Common myeloid progenitor, CD34-positive (primary cell): ENCODE measurements at regions of chr15 and their contacts with region 1.

Region 1: DNA sequence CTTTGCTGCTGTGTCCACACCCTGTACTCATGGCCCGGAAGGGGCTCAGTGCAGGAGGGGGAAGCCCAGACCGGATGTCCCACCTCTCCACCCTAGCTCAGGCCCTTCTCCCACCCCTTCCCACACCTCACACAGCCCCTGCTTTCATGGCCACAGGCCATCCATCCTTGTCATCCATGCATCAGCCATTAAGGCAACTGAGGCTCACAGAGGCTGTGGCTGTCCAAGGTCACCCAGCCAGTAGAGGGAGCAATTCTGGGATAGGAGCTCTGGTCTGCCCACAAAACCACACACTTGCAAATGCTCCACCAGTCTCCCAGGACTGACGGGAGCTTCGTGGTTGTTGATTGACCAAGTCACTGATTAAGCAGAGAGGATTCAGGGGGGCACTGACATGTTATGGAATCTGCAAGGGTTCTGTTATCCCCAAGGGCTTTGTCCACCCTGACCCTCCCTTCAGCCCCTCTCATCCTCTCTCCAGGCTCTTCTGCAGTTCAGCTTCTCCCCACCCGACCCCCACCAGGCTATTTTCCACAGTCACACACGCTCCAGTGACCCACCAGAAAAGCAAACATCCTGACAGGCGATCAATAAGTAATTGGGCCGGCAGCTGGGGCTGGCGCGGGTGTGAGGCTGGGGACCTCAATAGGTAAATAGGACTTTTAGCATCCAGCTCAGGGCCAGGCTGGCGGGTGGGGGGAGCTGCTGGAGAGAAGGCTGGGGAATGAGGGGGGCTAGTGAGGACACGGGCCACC is 15.1 kb downstream of the LINGO1 start:
- DNase-seq: peak in 2 of 3 donors; percentile 20 to 21
- H3K4me3 ChIP-seq: no peak overlapping the region
- H3K27ac ChIP-seq: no peak overlapping the region
- H3K4me1 ChIP-seq: no peaks in the 10 kb centered on the region
- H3K27me3 ChIP-seq: no peaks in the 10 kb centered on the region

Region 2: DNA sequence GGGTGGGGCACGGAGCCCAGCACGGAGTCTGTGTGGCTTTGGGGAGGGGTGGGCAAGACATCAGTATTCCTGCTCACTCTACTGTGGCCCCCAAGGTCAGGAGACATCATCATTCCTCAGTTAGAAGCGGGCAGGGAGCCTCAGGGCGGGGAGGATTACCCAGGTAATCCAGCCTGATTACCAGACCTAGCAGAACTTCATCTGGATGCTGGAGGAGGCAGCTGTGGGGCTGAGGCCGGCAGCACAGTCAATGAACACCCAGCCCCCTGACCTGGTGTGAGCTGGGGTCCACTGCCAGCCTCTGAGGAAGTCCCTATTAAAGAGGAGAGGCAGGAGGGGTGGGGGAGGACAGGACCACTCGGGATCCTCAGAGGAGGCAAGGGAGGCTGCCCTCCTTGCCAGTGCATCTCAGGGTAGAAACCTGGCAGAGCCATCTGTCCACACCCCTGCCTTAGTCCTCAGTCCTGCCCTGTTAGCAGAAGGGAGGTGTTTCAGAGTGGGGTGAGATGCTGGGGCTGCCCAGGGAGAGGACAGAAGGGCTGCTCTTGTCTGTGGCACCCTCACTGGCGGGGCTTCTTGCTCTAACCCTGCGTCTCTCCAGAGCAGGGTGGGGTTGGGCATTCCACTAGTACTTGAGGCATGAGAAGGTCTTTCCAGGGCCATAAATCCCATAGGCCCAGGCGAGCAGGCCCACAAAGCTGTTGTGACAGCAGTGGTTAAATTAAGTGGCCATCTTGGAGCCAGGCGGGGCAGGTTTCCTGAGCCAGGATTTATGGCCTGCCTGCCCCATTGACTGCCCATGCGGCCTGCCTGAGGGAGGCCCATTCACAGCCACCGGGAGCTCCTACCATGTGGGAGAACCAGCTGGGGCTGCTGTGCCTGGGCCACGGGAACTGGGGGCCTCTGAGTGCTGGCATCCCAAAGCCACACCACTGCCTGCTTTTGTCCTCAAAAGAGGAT is 67.1 kb before region 1 on chr15:
- CTCF ChIA-PET with region 1: no interaction called
- POLR2A ChIA-PET with region 1: no interaction called
- DNase-seq: no peak
- H3K4me3 ChIP-seq: no peak overlapping the region
- H3K27ac ChIP-seq: no peak overlapping the region
- H3K4me1 ChIP-seq: peaks cover 0 to 20% (median 10%) of the 10 kb centered on the region in 4 experiments
- H3K27me3 ChIP-seq: peaks cover 0 to 2% (median 0%) of the 10 kb centered on the region in 5 experiments

Region 3: DNA sequence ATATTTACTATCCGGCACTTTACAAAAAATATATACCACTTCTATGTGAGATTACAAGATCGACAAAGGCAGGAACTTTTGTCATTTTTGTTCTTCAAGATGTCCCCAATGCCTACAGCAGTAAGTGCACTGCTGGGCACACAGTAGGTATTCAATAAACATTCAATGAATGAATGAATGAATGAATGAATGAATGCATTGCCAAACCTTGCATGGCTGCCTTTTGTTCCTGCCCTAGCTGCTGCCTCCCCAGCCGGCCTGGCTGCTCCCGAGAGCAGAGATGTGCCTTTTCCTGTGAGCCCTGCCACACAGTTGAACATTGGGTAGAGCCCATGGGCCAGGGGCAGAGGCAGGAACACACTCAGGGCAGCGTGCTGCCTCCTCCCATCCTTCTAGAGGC is 22.4 kb before region 1 on chr15:
- CTCF ChIA-PET with region 1: no interaction called
- POLR2A ChIA-PET with region 1: no interaction called
- DNase-seq: no peak
- H3K4me3 ChIP-seq: no peak overlapping the region
- H3K27ac ChIP-seq: no peak overlapping the region
- H3K4me1 ChIP-seq: no peaks in the 10 kb centered on the region
- H3K27me3 ChIP-seq: peaks cover 0 to 3% (median 0%) of the 10 kb centered on the region in 5 experiments

Region 4: GRCh38 chr15:77607111-77607893 is 10.4 kb before region 1 on chr15:
- CTCF ChIA-PET with region 1: interaction called, 32 read pairs
- POLR2A ChIA-PET with region 1: no interaction called
- DNase-seq: no peak
- H3K4me3 ChIP-seq: no peak overlapping the region
- H3K27ac ChIP-seq: no peak overlapping the region
- H3K4me1 ChIP-seq: peaks cover 0 to 8% (median 4%) of the 10 kb centered on the region in 4 experiments
- H3K27me3 ChIP-seq: peaks cover 0 to 13% (median 2%) of the 10 kb centered on the region in 5 experiments

Region 5: GRCh38 chr15:77633134-77633912 is 15.7 kb after region 1 on chr15:
- CTCF ChIA-PET with region 1: interaction called, 13 read pairs
- POLR2A ChIA-PET with region 1: no interaction called
- DNase-seq: peak; percentile 36 to 52 (median 44)
- H3K4me3 ChIP-seq: peak overlapping the region; percentile 26 to 72 (median 55)
- H3K27ac ChIP-seq: no peak overlapping the region
- H3K4me1 ChIP-seq: peaks cover 0 to 21% (median 14%) of the 10 kb centered on the region in 4 experiments
- H3K27me3 ChIP-seq: peaks cover 0 to 86% (median 44%) of the 10 kb centered on the region in 5 experiments

Region 6: GRCh38 chr15:77870195-77871065 is 252.8 kb after region 1 on chr15:
- CTCF ChIA-PET with region 1: no interaction called
- POLR2A ChIA-PET with region 1: no interaction called
- DNase-seq: peak in 2 of 3 donors; percentile 21 to 42
- H3K4me3 ChIP-seq: no peak overlapping the region
- H3K27ac ChIP-seq: no peak overlapping the region
- H3K4me1 ChIP-seq: no peaks in the 10 kb centered on the region
- H3K27me3 ChIP-seq: no peaks in the 10 kb centered on the region